ENCODE measurements at regions of chr22 and their contacts with region 1.

Region 1: DNA sequence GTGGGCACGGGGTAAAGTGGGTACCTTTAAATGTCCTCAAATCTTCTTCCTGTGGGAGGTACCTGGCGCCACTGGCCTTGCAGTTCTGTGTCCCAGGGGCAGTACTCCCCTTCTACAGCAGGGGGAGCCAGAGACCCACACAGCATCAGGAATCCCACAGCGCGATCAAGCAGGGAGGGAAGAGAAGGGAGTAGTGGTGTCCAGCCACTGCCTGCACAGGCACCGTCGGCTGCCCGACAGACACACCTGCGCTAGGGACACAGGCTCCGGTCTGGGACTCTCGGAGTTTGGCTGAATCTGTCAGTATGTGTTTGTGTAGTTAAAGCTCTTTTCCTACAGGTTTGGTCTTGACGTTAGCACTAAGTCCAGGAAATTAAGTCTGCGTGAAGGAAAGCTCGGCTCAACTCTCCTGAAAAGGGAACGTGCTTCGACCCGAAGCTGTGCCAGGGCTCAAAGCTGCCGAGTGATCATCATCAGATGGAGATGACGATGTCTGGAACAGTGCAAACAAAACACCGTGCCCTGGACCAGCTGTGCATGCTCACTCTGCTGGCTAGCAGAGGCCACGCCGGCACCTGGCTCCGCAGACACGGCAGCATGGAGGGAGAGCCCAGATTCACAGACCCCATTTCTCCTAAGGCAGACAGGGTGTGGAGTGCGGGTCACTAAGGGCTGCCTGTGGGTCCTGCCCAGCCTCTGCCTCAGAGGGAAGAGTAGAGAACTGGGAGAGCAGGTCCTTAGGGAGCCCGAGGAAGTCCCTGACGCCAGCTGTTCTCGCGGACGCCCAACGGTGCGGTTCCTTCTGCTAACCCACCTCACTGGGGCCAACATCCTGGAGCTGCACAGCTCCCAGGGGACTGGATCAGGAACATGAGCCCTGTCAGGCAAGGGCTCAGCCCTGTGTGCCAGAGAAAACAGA is 56.0 kb upstream of the BID start:
- DNase-seq: peak; percentile 91
- H3K4me3 ChIP-seq: no peak overlapping the region
- H3K27ac ChIP-seq: peak overlapping the region; percentile 55 to 72 (median 64)
- H3K4me1 ChIP-seq: peaks cover 4 to 36% (median 29%) of the 10 kb centered on the region in 4 donors
- H3K27me3 ChIP-seq: no peaks in the 10 kb centered on the region
- CTCF ChIP-seq: peak; percentile 99 to 100 (median 99)
- EP300 ChIP-seq: no peak
- POLR2A ChIP-seq: no peak

Region 2: GRCh38 chr22:17597217-17597616 is 233.1 kb before region 1 on chr22:
- in situ Hi-C with region 1: no loop called
- intact Hi-C with region 1: no loop called
- DNase-seq: no peak
- H3K4me3 ChIP-seq: no peak overlapping the region
- H3K27ac ChIP-seq: peak overlapping the region; percentile 0 to 54 (median 28)
- H3K4me1 ChIP-seq: peaks cover 0 to 6% (median 0%) of the 10 kb centered on the region in 4 donors
- H3K27me3 ChIP-seq: no peaks in the 10 kb centered on the region
- CTCF ChIP-seq: no peak
- EP300 ChIP-seq: no peak
- POLR2A ChIP-seq: no peak

Region 3: DNA sequence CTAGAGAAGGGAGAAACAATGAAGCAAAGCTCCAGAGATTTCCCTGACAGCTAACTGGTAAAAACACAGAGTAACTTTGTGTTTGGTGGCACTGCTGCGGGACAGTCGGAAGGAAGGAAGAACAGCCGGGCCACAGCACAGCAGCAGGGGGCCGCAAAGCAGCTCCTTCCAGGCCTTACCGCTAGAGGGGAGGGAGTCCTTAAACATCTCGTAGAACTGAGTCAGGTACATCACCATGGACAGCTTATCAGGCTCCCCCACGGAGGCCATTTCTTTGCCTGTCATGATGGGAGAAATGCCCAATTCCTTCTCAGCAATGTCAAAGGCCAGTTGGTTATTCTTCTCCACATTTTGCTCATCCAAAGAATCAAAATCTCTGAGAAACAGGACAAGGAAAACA is 58.6 kb after region 1 on chr22:
- in situ Hi-C with region 1: no loop called
- intact Hi-C with region 1: loop called (anchors 10 kb)
- DNase-seq: no peak
- H3K4me3 ChIP-seq: no peak overlapping the region
- H3K27ac ChIP-seq: peak overlapping the region in 1 of 4 donors; percentile 85
- H3K4me1 ChIP-seq: peaks cover 12 to 42% (median 33%) of the 10 kb centered on the region in 4 donors
- H3K27me3 ChIP-seq: no peaks in the 10 kb centered on the region
- CTCF ChIP-seq: no peak
- EP300 ChIP-seq: no peak
- POLR2A ChIP-seq: no peak

Region 4: GRCh38 chr22:18070556-18071306 is 240.4 kb after region 1 on chr22:
- in situ Hi-C with region 1: loop called in 3 of 4 experiments (anchors 5 to 10 kb)
- intact Hi-C with region 1: loop called (anchors 5 kb)
- DNase-seq: no peak
- H3K4me3 ChIP-seq: no peak overlapping the region
- H3K27ac ChIP-seq: no peak overlapping the region
- H3K4me1 ChIP-seq: peaks cover 0 to 51% (median 20%) of the 10 kb centered on the region in 4 donors
- H3K27me3 ChIP-seq: no peaks in the 10 kb centered on the region
- CTCF ChIP-seq: no peak
- EP300 ChIP-seq: no peak
- POLR2A ChIP-seq: no peak